Activated T-helper 1 cell treated with anti-CD3 and anti-CD28 coated beads, Interleukin-12 subunit alpha, Interleukin-12 subunit beta, Interleukin-2, Interleukin-4 antibody, amounts not matched to agents 30 ng/mL and 10 ng/mL and 1 ng/mL, durations not matched to agents 14 hours and 24 hours and 36 hours (primary cell): ENCODE measurements at regions of chr2 and their contacts with region 1.

Region 1: DNA sequence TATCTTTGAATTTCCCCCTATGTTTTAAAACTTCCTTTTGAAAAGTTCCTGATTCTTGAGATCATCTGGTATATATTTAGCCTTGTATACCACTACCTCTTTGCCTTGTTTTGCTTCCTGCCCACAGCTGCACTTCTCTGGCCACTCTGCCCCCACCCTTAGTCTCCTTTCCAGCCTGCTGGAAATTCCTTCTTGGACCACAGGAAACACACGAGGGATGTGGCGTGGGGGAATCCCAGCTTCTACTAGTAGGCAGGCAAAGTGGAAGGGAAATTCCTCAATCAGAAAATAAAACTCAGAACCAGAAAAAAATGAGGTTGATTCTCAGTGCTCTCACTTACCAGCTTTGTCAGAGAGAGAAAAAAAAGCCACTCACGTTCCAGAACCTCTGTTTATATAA is 13.4 kb downstream of the IL18RAP start:
- DNase-seq: no peak
- H3K4me3 Mint-ChIP-seq: peak overlapping the region; percentile 53
- H3K27ac Mint-ChIP-seq: peak overlapping the region; percentile 86
- H3K4me1 Mint-ChIP-seq: peaks cover 33% of the 10 kb centered on the region
- H3K27me3 Mint-ChIP-seq: no peaks in the 10 kb centered on the region

Region 2: DNA sequence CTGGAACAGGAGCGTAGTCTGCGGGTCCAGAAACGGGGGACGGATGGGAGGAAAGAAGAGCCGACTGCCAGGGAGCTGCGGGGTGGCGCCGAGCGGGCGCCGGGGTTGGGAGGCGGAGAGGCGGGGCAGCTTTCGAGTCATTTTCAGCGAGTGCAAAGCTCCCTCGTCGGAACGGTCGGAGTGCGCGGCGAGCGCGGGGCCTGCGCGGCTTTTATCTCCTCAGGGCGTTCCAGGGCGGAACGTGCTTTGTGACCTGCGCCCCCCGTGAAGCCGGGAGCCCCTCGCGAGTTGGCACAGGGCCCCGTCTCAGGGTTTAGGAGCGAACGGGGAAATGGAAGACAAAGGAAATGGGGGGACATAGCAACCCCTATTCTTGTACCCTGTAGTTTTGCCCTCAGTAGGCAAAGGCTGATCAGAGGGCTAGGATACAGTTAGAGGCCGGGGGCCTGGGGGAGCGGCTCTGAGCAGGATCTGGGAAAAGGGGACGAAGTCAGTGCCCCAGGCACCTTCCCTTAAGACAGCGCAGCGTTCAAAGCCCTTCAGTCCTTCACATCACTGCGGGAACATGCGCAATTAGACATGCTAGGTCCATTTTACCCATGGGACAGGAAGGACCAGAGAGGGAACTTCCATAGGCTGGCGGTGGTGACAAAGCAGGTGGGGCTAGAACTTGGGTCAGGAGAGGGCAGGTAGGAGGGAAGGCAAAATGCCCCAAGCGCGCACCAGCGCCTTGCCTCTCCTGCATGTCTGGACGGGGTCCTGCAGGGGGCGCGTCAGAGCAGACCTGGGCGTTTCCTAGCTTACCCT is 185.1 kb before region 1 on chr2:
- intact Hi-C with region 1: loop called (anchors 1 kb)
- DNase-seq: peak; percentile 49
- H3K4me3 Mint-ChIP-seq: peak overlapping the region; percentile 72
- H3K27ac Mint-ChIP-seq: peak overlapping the region; percentile 71
- H3K4me1 Mint-ChIP-seq: peaks cover 44% of the 10 kb centered on the region
- H3K27me3 Mint-ChIP-seq: peaks cover 4% of the 10 kb centered on the region

Region 3: DNA sequence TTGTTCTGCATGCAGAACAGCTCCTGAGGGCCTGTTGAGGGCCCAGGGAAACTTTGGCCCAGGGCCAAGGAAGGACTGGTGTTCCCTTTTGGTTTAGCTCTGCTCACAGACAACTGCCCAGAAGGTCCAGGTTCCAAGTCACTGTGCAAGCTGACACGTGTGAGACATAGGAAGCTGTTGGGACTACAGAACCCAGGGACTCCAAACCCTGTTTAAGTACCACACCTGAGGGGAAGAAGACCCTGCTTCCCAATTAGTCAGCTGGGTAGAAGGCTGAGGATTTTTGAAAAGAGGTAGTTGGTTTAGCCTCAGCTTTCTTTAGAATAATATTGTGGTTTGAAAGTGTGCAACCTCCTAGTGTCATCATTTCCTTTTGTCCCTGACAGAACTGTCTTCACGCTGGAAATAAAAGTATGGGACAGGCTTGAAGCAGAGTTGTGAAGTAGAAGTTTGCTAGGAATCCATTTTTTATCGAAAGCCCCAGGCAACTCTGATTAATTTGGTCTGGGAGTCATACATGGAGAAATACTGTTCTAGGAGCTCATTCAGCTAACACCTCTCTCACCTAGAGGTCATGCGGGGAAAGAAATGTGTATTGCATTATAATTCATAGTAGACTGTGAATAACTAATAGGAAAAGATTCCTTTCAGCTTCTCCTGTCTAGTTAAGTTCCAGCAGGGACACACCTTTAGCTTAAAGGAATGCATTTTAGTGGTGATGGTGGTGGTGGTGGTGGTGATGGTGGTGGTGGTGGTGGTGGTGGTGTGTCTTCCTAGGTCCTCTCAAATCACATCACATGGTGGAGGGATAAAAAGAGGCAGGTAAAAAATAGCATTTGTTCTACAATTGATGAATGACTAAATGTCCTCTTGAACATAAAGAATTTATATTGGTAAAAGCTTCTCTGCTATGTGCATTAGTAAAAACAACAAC is 144.7 kb before region 1 on chr2:
- intact Hi-C with region 1: loop called (anchors 2 kb)
- DNase-seq: no peak
- H3K4me3 Mint-ChIP-seq: peak overlapping the region; percentile 15
- H3K27ac Mint-ChIP-seq: peak overlapping the region; percentile 20
- H3K4me1 Mint-ChIP-seq: peaks cover 55% of the 10 kb centered on the region
- H3K27me3 Mint-ChIP-seq: no peaks in the 10 kb centered on the region

Region 4: GRCh38 chr2:102391565-102391964 is 44.8 kb before region 1 on chr2:
- intact Hi-C with region 1: loop called (anchors 2 kb)
- DNase-seq: no peak
- H3K4me3 Mint-ChIP-seq: no peak overlapping the region
- H3K27ac Mint-ChIP-seq: peak overlapping the region; percentile 57
- H3K4me1 Mint-ChIP-seq: peaks cover 49% of the 10 kb centered on the region
- H3K27me3 Mint-ChIP-seq: no peaks in the 10 kb centered on the region

Region 5: GRCh38 chr2:102424754-102425153 is 11.6 kb before region 1 on chr2:
- intact Hi-C with region 1: loop called (anchors 1 kb)
- DNase-seq: no peak
- H3K4me3 Mint-ChIP-seq: peak overlapping the region; percentile 90
- H3K27ac Mint-ChIP-seq: peak overlapping the region; percentile 98
- H3K4me1 Mint-ChIP-seq: peaks cover 98% of the 10 kb centered on the region
- H3K27me3 Mint-ChIP-seq: no peaks in the 10 kb centered on the region

Region 6: GRCh38 chr2:102736410-102737409 is 300.4 kb after region 1 on chr2:
- intact Hi-C with region 1: no loop called
- DNase-seq: peak; percentile 85
- H3K4me3 Mint-ChIP-seq: peak overlapping the region; percentile 96
- H3K27ac Mint-ChIP-seq: peak overlapping the region; percentile 84
- H3K4me1 Mint-ChIP-seq: peaks cover 28% of the 10 kb centered on the region
- H3K27me3 Mint-ChIP-seq: peaks cover 2% of the 10 kb centered on the region